Heart right ventricle (tissue), 16 donors: ENCODE measurements at regions of chr11 and their contacts with region 1.

Region 1: GRCh38 chr11:134261626-134262488 is 8.5 kb downstream of the ACAD8 start:
- DNase-seq: no peak
- ATAC-seq: peak in 1 of 8 donors; percentile 44
- H3K4me3 ChIP-seq: no peak overlapping the region
- H3K27ac ChIP-seq: no peak overlapping the region
- H3K4me1 ChIP-seq: peaks cover 0 to 4% (median 0%) of the 10 kb centered on the region in 9 donors
- H3K27me3 ChIP-seq: no peaks in the 10 kb centered on the region
- CTCF ChIP-seq: peak in 7 of 9 donors; percentile 23 to 56 (median 31)

Region 2: GRCh38 chr11:134328433-134328832 is 66.6 kb after region 1 on chr11:
- intact Hi-C with region 1: loop called in 1 of 10 experiments (anchors 10 kb)
- DNase-seq: no peak
- ATAC-seq: no peak
- H3K4me3 ChIP-seq: no peak overlapping the region
- H3K27ac ChIP-seq: no peak overlapping the region
- H3K4me1 ChIP-seq: peaks cover 5 to 21% (median 14%) of the 10 kb centered on the region in 9 donors
- H3K27me3 ChIP-seq: peaks cover 0 to 39% (median 32%) of the 10 kb centered on the region in 7 donors
- CTCF ChIP-seq: no peak

Region 3: DNA sequence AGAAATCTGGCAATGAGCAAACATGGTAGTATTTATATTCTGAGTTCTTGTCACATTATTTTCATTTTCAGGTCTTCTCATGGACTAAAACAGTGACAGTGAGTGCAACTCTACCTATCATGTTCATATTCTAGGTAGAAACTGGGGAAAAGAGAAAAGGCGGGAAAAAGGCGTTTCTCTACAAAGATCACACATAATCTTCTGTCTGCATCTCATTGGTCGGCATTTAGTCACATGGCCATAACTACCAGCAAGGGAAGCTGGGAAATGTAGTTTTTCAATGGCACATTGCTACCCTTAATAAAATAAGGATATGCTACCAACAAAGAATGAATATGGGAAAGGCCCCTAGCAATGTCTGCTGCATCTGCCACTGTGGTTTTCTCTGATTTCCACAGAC is 207.8 kb after region 1 on chr11:
- intact Hi-C with region 1: no loop called
- DNase-seq: no peak
- ATAC-seq: no peak
- H3K4me3 ChIP-seq: no peak overlapping the region
- H3K27ac ChIP-seq: no peak overlapping the region
- H3K4me1 ChIP-seq: no peaks in the 10 kb centered on the region
- H3K27me3 ChIP-seq: peaks cover 0 to 78% (median 64%) of the 10 kb centered on the region in 7 donors
- CTCF ChIP-seq: no peak